CD4-positive, alpha-beta memory T cell (primary cell): ENCODE measurements at regions of chr1 and their contacts with region 1.

Region 1: GRCh38 chr1:183635606-183636333 is at the start of gene ARPC5:
- DNase-seq: peak; percentile 94 to 95 (median 94)
- H3K4me3 ChIP-seq: peak within 1 kb of the TSS; percentile 72 to 88
- H3K4me3 Mint-ChIP-seq: peak within 1 kb of the TSS; percentile 100
- H3K27ac ChIP-seq: peak within 1 kb of the TSS; percentile 81
- H3K27ac Mint-ChIP-seq: peak within 1 kb of the TSS; percentile 92 to 100 (median 99)
- H3K4me1 ChIP-seq: peaks cover 44% of the 10 kb centered on the region
- H3K4me1 Mint-ChIP-seq: peaks cover 26 to 54% (median 36%) of the 10 kb centered on the region in 4 donors
- H3K27me3 ChIP-seq: no peaks in the 10 kb centered on the region
- H3K27me3 Mint-ChIP-seq: no peaks in the 10 kb centered on the region
- total RNA-seq, gene ARPC5: 106 to 107 TPM

Region 2: GRCh38 chr1:183674339-183674738 is 38.6 kb after region 1 on chr1:
- CTCF ChIA-PET with region 1: no interaction called
- POLR2A ChIA-PET with region 1: no interaction called
- intact Hi-C with region 1: no loop called
- DNase-seq: no peak
- H3K4me3 ChIP-seq: no peak overlapping the region
- H3K4me3 Mint-ChIP-seq: no peak overlapping the region
- H3K27ac ChIP-seq: no peak overlapping the region
- H3K27ac Mint-ChIP-seq: no peak overlapping the region
- H3K4me1 ChIP-seq: no peaks in the 10 kb centered on the region
- H3K4me1 Mint-ChIP-seq: no peaks in the 10 kb centered on the region
- H3K27me3 ChIP-seq: no peaks in the 10 kb centered on the region
- H3K27me3 Mint-ChIP-seq: peaks cover 5 to 9% of the 10 kb centered on the region in 2 donors

Region 3: GRCh38 chr1:183685112-183685713 is 49.4 kb after region 1 on chr1:
- CTCF ChIA-PET with region 1: interaction called, 13 read pairs
- POLR2A ChIA-PET with region 1: interaction called, 3 read pairs
- intact Hi-C with region 1: loop called (anchors 10 kb)
- DNase-seq: peak in 4 of 5 donors; percentile 51 to 57 (median 56)
- H3K4me3 ChIP-seq: no peak overlapping the region
- H3K4me3 Mint-ChIP-seq: no peak overlapping the region
- H3K27ac ChIP-seq: no peak overlapping the region
- H3K27ac Mint-ChIP-seq: no peak overlapping the region
- H3K4me1 ChIP-seq: no peaks in the 10 kb centered on the region
- H3K4me1 Mint-ChIP-seq: no peaks in the 10 kb centered on the region
- H3K27me3 ChIP-seq: no peaks in the 10 kb centered on the region
- H3K27me3 Mint-ChIP-seq: peaks cover 4 to 12% of the 10 kb centered on the region in 2 donors

Region 4: DNA sequence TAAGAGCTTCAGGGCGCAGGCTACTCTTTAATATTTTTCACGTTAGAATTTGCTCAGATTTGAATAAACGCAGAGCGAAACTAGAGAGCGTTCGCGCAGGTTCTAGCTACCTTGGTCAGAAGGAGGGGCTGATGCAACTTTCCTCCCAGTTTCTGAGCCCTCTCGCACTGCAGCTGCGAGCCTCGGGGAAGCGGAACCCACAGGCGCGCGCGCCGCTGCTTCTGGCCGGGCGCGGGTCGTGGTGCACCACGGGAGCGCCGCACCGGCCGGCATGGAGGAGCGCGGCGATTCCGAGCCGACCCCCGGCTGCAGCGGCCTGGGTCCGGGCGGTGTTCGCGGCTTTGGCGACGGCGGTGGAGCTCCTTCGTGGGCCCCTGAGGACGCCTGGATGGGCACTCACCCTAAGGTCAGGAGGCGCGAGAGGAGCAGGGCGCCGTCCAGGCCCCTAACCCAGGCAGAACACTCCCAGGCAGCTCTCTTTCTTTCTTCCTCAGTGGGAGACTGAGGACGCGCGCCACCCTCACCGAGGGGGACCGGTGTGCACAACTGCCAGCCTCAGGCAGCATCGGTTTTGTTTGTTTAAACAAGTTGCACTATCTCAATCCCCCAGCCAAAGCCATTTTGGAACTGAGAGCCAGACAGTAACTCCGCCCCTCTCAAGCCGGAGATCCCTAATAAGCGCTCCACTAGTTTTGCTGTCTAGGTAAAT is 415.9 kb after region 1 on chr1 and contains the start of gene TSEN15:
- CTCF ChIA-PET with region 1: no interaction called
- POLR2A ChIA-PET with region 1: interaction called, 11 read pairs
- intact Hi-C with region 1: loop called (anchors 2 kb)
- DNase-seq: peak; percentile 66 to 74 (median 72)
- H3K4me3 ChIP-seq: peak within 1 kb of the TSS; percentile 88 to 95
- H3K4me3 Mint-ChIP-seq: peak within 1 kb of the TSS; percentile 98 to 99 (median 99)
- H3K27ac ChIP-seq: peak within 1 kb of the TSS; percentile 67
- H3K27ac Mint-ChIP-seq: peak within 1 kb of the TSS; percentile 89 to 98 (median 96)
- H3K4me1 ChIP-seq: peaks cover 33% of the 10 kb centered on the region
- H3K4me1 Mint-ChIP-seq: peaks cover 26 to 47% (median 37%) of the 10 kb centered on the region in 4 donors
- H3K27me3 ChIP-seq: no peaks in the 10 kb centered on the region
- H3K27me3 Mint-ChIP-seq: peaks cover 0 to 5% of the 10 kb centered on the region in 2 donors
- total RNA-seq, gene TSEN15: 34.0 to 42.2 TPM